GM18951 (cell line): ENCODE measurements at regions of chr7 and their contacts with region 1.

Region 1: DNA sequence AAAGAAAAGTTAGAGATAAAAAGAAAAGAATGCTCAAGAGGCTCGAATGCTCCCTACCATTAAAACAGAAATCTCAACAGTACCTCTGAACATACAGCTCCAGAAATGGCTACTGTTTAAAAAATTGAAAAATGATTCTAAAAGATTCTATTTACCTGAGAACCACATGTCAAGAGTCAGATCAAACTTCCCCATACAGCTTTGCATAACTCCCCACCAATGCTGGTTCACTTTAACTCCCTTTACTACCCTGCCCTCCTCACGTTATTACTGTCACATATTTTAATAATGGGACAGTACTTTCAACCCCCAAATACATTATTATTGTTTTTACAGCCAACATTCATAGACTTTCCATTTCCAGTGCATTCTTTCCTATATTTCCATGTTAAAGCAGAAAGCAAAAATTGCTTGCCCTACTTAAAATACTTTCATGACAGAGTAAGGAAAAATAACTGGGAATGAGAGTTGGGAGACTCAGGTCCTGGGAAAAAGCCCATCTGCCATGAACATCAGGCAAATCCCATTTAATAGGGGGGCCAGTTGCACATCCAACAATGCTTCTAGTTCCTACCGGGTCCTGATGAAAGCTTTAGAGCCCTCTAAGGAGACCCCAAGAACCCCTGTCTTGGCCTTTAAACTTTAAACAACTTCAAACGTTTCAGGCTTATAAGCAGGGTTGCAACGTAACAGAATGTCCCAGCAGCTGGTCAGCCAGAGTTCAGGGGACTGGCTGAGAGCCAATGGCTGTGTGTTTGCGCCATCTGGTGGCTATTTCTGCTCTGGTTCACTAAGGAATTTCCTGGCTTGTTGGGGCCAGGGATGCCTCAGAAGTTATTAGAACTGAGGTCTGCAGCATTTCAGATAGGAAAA is 247.4 kb downstream of the ELMO1 start:
- POLR2A ChIP-seq: no peak

Region 2: DNA sequence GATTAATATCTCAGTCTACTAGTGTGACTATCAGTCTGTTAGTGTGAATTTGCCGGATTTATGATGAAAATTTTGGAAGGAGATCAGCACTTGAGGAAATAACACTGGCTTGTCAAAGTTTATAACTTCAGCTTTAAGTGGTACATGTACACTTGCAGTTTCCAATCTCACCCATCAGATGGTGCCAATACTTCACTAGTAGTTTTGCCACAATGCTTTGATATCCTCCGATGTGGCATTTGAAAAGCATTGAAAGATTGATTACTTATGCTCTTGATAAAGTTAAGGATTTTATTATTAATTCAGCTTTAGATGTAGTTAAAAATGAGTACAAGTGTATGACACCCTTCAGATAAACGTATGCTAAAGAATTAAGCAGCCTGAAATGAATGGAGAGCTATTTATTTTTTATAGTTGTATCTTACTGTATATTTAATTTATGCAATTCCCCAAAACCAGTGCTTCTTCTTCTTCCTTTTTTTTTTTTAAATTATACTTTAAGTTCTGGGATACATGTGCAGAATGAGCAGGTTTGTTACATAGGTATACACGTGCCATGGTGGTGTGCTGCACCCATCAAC is 713.4 kb before region 1 on chr7:
- in situ Hi-C with region 1: loop called (anchors 10 kb)
- POLR2A ChIP-seq: no peak

Region 3: GRCh38 chr7:36986429-36987362 is 214.5 kb before region 1 on chr7:
- in situ Hi-C with region 1: loop called (anchors 25 kb)
- POLR2A ChIP-seq: no peak